ENCODE measurements at regions of chr19 and their contacts with region 1.

Region 1: DNA sequence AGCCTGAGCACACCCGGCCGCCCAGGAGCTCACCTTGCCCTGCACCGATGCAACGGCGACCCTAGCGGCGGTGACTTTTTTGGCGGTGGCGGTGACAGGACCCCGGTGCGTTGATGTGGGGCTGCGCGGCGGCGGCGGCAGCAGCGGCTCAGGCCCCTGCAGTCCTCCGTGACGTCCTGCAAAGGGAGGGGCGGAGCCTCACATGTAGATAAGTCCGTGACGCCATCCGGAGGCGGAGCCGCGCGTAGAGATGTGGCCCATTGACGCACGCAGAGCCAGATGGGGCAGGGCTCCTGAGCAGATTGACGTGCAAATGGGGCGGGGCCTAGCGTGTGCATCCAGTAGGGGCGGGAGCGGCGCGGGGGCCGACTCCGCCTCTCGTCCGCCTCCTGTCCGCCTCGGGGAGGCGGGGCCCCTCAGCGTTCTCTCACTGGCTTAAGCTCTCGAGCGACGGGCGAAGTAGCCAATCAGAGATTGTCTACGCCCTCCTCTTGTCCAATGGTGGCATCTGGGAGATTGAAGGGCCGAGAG is at the start of gene RAB3A:
- DNase-seq: peak; percentile 99 to 100 (median 100)
- ATAC-seq: peak; percentile 96
- H3K4me3 ChIP-seq: peak within 1 kb of the TSS; percentile 26
- H3K4me1 ChIP-seq: peaks cover 9% of the 10 kb centered on the region
- CTCF ChIP-seq: peak; percentile 43
- total RNA-seq, gene RAB3A: 5.7 to 7.6 (median 6.8) TPM

Region 2: DNA sequence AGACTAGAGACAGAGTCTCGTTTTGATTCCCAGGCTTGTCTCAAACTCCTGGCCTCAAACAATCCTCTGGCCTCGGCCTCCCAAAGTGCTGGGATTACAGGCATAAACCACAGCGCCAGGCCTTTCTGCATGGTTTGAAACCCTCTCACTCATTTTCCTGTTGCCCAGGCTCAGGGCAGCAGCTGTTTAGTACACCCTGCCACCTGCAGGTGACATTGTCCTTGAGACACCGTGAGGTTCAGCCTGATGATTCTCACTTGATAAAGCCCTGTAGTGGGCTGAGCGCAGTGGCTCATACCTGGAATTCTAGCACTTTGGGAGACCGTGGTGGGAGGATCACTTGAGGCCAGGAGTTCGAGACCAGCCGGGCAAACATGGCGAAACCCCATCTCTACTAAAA is 129.7 kb before region 1 on chr19:
- intact Hi-C with region 1: no loop called
- DNase-seq: no peak
- ATAC-seq: no peak
- H3K4me3 ChIP-seq: no peak overlapping the region
- H3K4me1 ChIP-seq: no peaks in the 10 kb centered on the region
- CTCF ChIP-seq: no peak

Region 3: DNA sequence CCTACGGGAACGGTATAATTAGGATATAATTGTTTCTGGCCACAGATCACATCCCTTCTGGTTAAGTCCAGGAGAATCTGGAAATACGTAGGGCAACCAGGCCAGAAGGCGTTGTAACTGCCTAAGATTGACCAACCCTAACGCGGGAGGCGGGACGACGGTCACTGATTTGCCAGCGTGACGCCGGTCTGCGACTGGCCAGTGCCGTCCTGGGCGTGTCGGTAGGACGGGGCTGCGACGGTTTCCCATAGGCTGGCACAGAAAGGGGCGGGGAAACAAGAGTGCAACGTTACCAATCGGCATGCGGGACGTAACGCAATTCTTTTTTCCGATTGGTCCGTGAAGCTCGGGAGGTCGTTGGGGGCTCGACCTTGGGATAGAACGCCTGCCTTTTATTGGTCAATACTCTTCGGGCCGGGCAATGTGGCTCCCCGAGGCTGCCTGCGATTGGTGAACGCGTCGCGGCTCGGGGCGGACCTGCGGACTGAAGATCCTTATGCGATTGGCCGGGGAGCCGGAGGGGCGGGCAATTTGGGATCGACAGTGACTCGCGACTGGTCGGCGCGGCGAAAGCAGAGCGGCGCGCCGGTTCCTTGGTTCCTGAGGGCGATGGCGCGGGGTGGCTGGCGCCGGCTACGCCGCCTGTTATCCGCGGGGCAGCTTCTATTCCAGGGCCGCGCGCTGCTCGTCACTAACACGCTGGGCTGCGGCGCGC is 11.1 kb before region 1 on chr19 and contains the start of gene MPV17L2:
- intact Hi-C with region 1: loop called in 1 of 2 experiments (anchors 1 kb)
- DNase-seq: peak; percentile 98 to 100 (median 99)
- ATAC-seq: peak; percentile 93
- H3K4me3 ChIP-seq: peak within 1 kb of the TSS; percentile 67
- H3K4me1 ChIP-seq: peaks cover 20% of the 10 kb centered on the region
- CTCF ChIP-seq: no peak
- total RNA-seq, gene MPV17L2: 6.7 to 12.4 (median 12.0) TPM

Region 4: GRCh38 chr19:18251587-18252369 is 47.9 kb after region 1 on chr19:
- intact Hi-C with region 1: loop called in 1 of 2 experiments (anchors 10 kb)
- DNase-seq: peak; percentile 66 to 88 (median 82)
- ATAC-seq: peak; percentile 53
- H3K4me3 ChIP-seq: no peak overlapping the region
- H3K4me1 ChIP-seq: peaks cover 19% of the 10 kb centered on the region
- CTCF ChIP-seq: peak; percentile 86

Region 5: GRCh38 chr19:18571564-18572300 is 367.8 kb after region 1 on chr19 and contains the start of gene UBA52:
- intact Hi-C with region 1: no loop called
- DNase-seq: peak; percentile 99 to 100 (median 99)
- ATAC-seq: peak; percentile 99
- H3K4me3 ChIP-seq: peak within 1 kb of the TSS; percentile 76
- H3K4me1 ChIP-seq: peaks cover 12% of the 10 kb centered on the region
- CTCF ChIP-seq: no peak
- total RNA-seq, gene UBA52: 771 to 910 (median 811) TPM

Measured in mucosa of descending colon (tissue), 3 donors.